Tibial artery (tissue), 4 donors: ENCODE measurements at regions of chr5 and their contacts with region 1.

Region 1: GRCh38 chr5:95870105-95870672 is 47.7 kb upstream of the GLRX start:
- DNase-seq: no peak
- H3K4me3 ChIP-seq: no peak overlapping the region
- H3K27ac ChIP-seq: peak overlapping the region; percentile 27 to 65
- H3K4me1 ChIP-seq: peaks cover 0 to 43% (median 13%) of the 10 kb centered on the region in 4 donors
- H3K27me3 ChIP-seq: no peaks in the 10 kb centered on the region
- CTCF ChIP-seq: no peak

Region 2: DNA sequence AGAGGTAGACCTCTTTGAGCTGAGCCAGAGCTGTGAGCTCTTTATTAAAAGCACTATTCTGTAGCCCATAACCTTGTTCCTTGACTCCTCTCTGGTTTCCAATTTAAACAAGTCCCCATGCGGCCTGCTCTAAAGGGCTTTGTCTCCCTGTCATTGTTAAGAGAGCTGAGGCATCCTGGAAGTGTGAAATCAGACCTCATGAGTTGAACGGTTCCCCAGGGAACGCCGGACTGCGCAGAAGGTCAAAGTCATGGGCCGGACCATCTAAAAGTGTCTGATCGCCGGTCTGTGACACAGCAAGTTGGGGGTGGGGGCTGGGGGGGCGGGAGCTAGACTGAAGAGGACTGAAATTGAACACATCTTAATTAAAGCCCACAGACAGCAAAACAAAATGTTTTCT is 985.9 kb before region 1 on chr5:
- intact Hi-C with region 1: no loop called
- DNase-seq: no peak
- H3K4me3 ChIP-seq: no peak overlapping the region
- H3K27ac ChIP-seq: no peak overlapping the region
- H3K4me1 ChIP-seq: no peaks in the 10 kb centered on the region
- H3K27me3 ChIP-seq: no peaks in the 10 kb centered on the region
- CTCF ChIP-seq: no peak

Region 3: GRCh38 chr5:95422838-95423237 is 447.4 kb before region 1 on chr5:
- intact Hi-C with region 1: loop called (anchors 5 kb)
- DNase-seq: no peak
- H3K4me3 ChIP-seq: no peak overlapping the region
- H3K27ac ChIP-seq: no peak overlapping the region
- H3K4me1 ChIP-seq: no peaks in the 10 kb centered on the region
- H3K27me3 ChIP-seq: no peaks in the 10 kb centered on the region
- CTCF ChIP-seq: no peak

Region 4: DNA sequence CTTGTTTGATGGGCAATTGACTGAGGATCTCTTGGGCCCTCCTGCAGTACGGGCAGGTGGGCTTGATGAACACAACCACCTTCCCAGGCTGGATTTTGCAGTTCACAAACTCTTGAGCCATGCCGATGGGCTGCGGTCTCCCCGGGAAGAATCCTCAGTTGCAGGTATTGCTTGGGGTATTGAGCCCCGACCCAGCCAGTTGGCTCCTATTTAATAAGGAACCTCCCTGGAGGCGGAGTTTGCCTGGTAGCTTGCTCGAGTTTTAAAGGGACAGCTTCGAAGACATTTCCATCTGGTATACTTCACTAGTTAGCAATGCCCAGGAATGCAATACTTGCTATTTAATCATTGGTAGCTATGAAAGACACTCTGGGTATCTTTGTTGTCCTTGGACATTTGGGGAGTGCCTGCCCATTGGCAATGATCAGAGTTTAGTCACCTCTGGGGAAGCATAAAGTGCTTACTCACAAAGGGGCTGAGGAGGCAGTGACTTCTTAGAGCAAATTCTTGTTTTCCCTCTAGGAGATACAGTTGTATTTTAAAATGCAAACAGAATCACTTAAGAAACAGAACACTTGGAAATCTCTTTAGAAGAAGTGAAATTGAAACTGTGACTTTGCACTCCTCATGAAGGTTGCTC is 47.5 kb before region 1 on chr5 and contains the start of gene GLRX:
- intact Hi-C with region 1: no loop called
- DNase-seq: peak; percentile 86 to 88
- H3K4me3 ChIP-seq: peak within 1 kb of the TSS; percentile 68 to 77
- H3K27ac ChIP-seq: peak within 1 kb of the TSS; percentile 77 to 87
- H3K4me1 ChIP-seq: peaks cover 3 to 61% (median 33%) of the 10 kb centered on the region in 4 donors
- H3K27me3 ChIP-seq: no peaks in the 10 kb centered on the region
- CTCF ChIP-seq: no peak